PC-9 (cell line): ENCODE measurements at regions of chr13 and their contacts with region 1.

Region 1: GRCh38 chr13:49996951-49997895 is at the start of gene TRIM13:
- DNase-seq: peak; percentile 73 to 83
- H3K4me3 ChIP-seq: peak within 1 kb of the TSS; percentile 98
- H3K27ac ChIP-seq: peak within 1 kb of the TSS; percentile 93
- H3K4me1 ChIP-seq: peaks cover 13% of the 10 kb centered on the region
- H3K27me3 ChIP-seq: no peaks in the 10 kb centered on the region
- CTCF ChIP-seq: peak; percentile 78
- total RNA-seq, gene TRIM13: 13.4 and 15.1 TPM in 2 replicates

Region 2: GRCh38 chr13:49740870-49741269 is 256.4 kb before region 1 on chr13:
- CTCF ChIA-PET with region 1: no interaction called
- POLR2A ChIA-PET with region 1: no interaction called
- intact Hi-C with region 1: no loop called
- DNase-seq: no peak
- H3K4me3 ChIP-seq: no peak overlapping the region
- H3K27ac ChIP-seq: no peak overlapping the region
- H3K4me1 ChIP-seq: peaks cover 3% of the 10 kb centered on the region; the same call in 1 of the 2 replicates
- H3K27me3 ChIP-seq: no peaks in the 10 kb centered on the region
- CTCF ChIP-seq: no peak

Region 3: GRCh38 chr13:49858183-49858856 is 138.9 kb before region 1 on chr13:
- CTCF ChIA-PET with region 1: interaction called, 6 read pairs
- POLR2A ChIA-PET with region 1: no interaction called
- intact Hi-C with region 1: loop called (anchors 10 kb)
- DNase-seq: peak; percentile 61 to 96
- H3K4me3 ChIP-seq: peak overlapping the region; percentile 55
- H3K27ac ChIP-seq: peak overlapping the region; percentile 98
- H3K4me1 ChIP-seq: peaks cover 33% of the 10 kb centered on the region
- H3K27me3 ChIP-seq: no peaks in the 10 kb centered on the region
- CTCF ChIP-seq: no peak

Region 4: DNA sequence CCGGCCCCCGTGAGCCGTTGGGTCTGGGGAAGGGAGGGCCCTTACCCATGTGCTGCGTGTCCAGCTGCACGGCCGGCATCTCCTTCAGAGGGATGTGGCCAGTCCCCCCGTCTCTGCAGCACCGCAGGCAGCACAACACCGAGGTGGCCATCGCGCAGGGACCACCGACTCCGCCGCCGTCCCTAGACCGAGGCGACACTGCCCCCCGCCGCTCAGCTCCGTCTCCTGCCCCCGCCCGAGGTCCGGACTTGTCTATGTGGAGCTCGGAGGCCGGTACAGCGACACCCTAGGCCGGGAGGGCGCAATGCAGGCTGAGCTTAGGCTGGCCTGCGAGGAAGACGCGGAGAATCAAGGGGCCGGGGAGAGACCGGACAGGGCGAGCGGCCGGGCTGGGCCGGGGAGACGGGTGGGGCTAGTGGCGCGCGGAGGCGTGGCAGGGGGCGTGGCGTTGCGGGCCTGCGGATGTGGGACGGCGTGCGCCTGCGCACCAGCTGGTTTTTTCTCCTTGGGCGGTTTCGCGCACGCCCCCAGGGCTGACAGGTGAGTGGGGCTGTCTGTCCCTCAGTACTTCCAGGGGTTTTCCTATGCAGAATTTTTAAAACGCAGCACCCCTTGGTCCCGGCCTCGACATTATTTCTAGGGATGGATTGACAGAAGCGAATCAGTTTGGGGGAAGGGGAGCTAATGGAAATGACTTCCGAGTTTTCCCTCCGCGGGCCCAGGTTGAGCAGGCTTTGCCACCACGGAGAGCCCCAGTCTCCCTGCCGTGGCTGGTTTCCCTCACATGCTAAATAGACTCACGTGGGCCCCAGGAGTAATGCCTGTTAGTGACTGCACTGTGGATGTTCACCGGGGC is 60.9 kb before region 1 on chr13 and contains the start of gene SPRYD7:
- CTCF ChIA-PET with region 1: interaction called, 10 read pairs
- POLR2A ChIA-PET with region 1: interaction called, 6 read pairs
- intact Hi-C with region 1: loop called (anchors 2 kb)
- DNase-seq: peak; percentile 92 to 99
- H3K4me3 ChIP-seq: peak within 1 kb of the TSS; percentile 90
- H3K27ac ChIP-seq: peak within 1 kb of the TSS; percentile 59
- H3K4me1 ChIP-seq: peaks cover 9% of the 10 kb centered on the region
- H3K27me3 ChIP-seq: no peaks in the 10 kb centered on the region
- CTCF ChIP-seq: peak; percentile 94
- total RNA-seq, gene SPRYD7: 5.3 and 6.4 TPM in 2 replicates

Region 5: GRCh38 chr13:49967456-49967855 is 29.8 kb before region 1 on chr13:
- CTCF ChIA-PET with region 1: no interaction called
- POLR2A ChIA-PET with region 1: no interaction called
- intact Hi-C with region 1: no loop called
- DNase-seq: no peak
- H3K4me3 ChIP-seq: no peak overlapping the region
- H3K27ac ChIP-seq: no peak overlapping the region
- H3K4me1 ChIP-seq: no peaks in the 10 kb centered on the region
- H3K27me3 ChIP-seq: no peaks in the 10 kb centered on the region
- CTCF ChIP-seq: no peak

Region 6: DNA sequence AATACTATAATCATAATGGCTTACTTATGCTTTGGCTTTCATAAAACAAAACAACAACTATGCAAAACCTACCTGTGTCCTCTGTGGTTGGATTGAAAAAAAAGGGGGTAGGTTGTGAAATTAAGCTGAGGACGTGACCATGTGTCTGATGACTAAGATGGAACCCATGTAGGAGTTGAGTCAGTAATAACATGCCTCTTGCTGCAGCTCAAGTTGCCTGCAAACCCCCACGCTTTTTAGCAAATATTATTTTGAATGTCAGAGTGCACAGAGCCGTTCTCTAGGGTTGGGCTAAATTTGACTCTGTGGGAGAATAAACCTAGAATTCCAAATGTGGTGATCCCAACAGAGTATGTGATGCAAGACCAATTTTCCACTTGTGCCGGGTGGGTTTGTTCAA is 227.3 kb after region 1 on chr13:
- CTCF ChIA-PET with region 1: no interaction called
- POLR2A ChIA-PET with region 1: no interaction called
- intact Hi-C with region 1: no loop called
- DNase-seq: no peak
- H3K4me3 ChIP-seq: no peak overlapping the region
- H3K27ac ChIP-seq: no peak overlapping the region
- H3K4me1 ChIP-seq: 0 out of 2 replicates have a peak, but pooled peaks cover 5% of the 10 kb centered on the region
- H3K27me3 ChIP-seq: no peaks in the 10 kb centered on the region
- CTCF ChIP-seq: no peak

Region 7: DNA sequence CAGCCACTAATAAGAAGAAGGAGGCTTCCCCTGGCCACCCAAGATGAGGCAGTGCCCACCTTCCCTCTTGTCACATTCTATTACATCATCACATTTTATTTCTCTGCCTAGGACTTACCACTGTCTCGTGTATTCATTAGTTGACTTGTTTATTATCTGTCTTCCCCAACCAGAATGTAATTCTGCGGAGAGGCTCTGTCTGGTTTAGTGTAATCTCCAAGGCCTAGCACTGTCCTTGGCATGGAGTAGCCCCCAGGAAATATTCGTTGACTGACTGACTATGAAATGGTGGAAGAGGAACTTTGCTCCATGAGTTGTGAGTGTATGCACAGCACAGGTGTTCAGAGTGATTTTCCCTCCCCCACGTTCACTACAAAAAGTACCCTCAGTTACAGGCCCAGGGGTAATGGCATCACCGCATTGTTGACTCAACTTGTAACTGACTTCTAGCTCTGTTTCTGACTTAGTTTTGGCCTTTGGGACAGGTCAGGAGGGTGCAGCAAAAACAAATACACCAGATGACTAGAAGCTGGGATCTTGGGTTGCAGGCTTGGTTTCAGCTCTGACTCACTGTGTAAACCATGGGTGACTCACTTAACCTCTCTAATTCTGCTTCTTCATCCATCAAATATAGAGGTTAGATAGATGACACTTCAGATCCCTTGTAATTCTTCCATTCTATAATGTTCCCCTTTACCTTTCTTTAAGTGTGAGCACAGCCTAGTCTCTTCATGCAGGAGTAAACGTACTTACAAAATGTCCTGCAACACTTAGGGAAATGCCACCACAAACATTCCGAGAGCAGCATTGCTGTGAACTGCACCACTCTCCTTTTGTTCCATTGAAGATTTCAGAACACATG is 247.7 kb after region 1 on chr13:
- CTCF ChIA-PET with region 1: no interaction called
- POLR2A ChIA-PET with region 1: no interaction called
- intact Hi-C with region 1: loop called (anchors 2 kb)
- DNase-seq: peak; percentile 72 to 97
- H3K4me3 ChIP-seq: no peak overlapping the region
- H3K27ac ChIP-seq: peak overlapping the region; percentile 67
- H3K4me1 ChIP-seq: peaks cover 23% of the 10 kb centered on the region
- H3K27me3 ChIP-seq: no peaks in the 10 kb centered on the region
- CTCF ChIP-seq: no peak